ENCODE measurements at regions of chr14 and their contacts with region 1.

Region 1: DNA sequence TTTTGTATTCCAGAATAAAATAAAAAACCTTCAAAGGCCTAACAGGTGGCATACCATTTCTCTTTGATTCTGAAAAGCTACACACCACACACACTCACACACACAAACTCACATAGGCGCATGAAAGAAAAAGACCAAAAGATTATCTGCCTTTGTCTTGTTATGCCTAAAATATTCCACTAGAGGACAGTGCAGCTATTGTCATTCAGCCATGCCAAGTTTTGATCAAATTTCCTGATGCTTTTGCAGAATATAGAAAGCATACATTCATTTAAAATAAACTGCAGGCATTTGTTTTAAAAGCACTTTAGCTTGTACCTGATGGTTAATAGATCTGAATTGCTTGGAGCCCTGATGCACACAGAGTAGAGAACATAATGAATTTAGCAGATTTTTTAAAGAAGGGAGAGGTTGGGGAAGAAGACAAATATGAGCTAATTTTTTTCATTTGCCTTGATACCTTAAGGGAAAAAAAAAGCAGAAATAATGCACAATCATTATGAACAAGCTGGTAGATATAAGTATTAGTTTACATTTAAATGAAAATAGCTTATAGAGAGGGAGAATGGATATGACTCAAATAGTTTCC is 1766.9 kb upstream of the SEL1L start:
- DNase-seq: no peak
- ATAC-seq: no peak
- H3K4me3 ChIP-seq: no peak overlapping the region
- H3K4me3 Mint-ChIP-seq: no peak overlapping the region
- H3K27ac ChIP-seq: no peak overlapping the region
- H3K27ac Mint-ChIP-seq: no peak overlapping the region
- H3K4me1 ChIP-seq: no peaks in the 10 kb centered on the region
- H3K4me1 Mint-ChIP-seq: no peaks in the 10 kb centered on the region
- H3K27me3 ChIP-seq: no peaks in the 10 kb centered on the region
- H3K27me3 Mint-ChIP-seq: no peaks in the 10 kb centered on the region

Region 2: GRCh38 chr14:83850092-83850491 is 549.5 kb after region 1 on chr14:
- CTCF ChIA-PET with region 1: interaction called in 1 of 2 experiments, 12 read pairs
- POLR2A ChIA-PET with region 1: no interaction called
- DNase-seq: no peak
- ATAC-seq: no peak
- H3K4me3 ChIP-seq: no peak overlapping the region
- H3K4me3 Mint-ChIP-seq: no peak overlapping the region
- H3K27ac ChIP-seq: no peak overlapping the region
- H3K27ac Mint-ChIP-seq: no peak overlapping the region
- H3K4me1 ChIP-seq: no peaks in the 10 kb centered on the region
- H3K4me1 Mint-ChIP-seq: no peaks in the 10 kb centered on the region
- H3K27me3 ChIP-seq: no peaks in the 10 kb centered on the region
- H3K27me3 Mint-ChIP-seq: no peaks in the 10 kb centered on the region

Measured in T-cell (primary cell).